WTC11 (cell line): ENCODE measurements at regions of chr2 and their contacts with region 1.

Region 1: DNA sequence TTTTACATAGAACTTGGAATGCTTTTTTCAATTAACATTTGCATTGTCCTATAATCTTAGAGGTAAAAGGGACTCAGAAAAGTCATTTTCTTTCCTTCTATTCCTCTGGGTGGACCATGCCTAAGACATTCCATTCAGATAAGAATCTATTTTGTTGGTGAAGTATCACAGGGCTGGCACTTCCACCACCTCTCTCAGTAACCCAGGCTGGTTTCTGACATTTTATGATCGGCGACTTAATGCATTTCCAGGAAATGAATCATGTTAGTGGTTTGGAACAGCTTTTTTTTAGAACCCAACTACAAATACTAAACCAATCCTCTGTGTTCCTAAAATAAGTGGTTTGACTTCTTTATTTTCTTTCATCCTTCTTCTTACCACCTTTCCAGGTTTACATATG is 27.0 kb downstream of the GAD1 start:
- DNase-seq: no peak
- ATAC-seq: no peak
- H3K4me3 Mint-ChIP-seq: no peak overlapping the region
- H3K27ac Mint-ChIP-seq: no peak overlapping the region
- H3K4me1 Mint-ChIP-seq: no peaks in the 10 kb centered on the region
- H3K27me3 Mint-ChIP-seq: no peaks in the 10 kb centered on the region
- CTCF ChIP-seq: no peak

Region 2: GRCh38 chr2:170822290-170823087 is 21.2 kb before region 1 on chr2:
- CTCF ChIA-PET with region 1: interaction called, 17 read pairs
- POLR2A ChIA-PET with region 1: no interaction called
- DNase-seq: peak; percentile 69
- ATAC-seq: peak; percentile 5
- H3K4me3 Mint-ChIP-seq: peak overlapping the region; percentile 84
- H3K27ac Mint-ChIP-seq: no peak overlapping the region
- H3K4me1 Mint-ChIP-seq: peaks cover 49% of the 10 kb centered on the region
- H3K27me3 Mint-ChIP-seq: peaks cover 98% of the 10 kb centered on the region
- CTCF ChIP-seq: peak; percentile 18; the same call in 1 of the 2 replicates

Region 3: DNA sequence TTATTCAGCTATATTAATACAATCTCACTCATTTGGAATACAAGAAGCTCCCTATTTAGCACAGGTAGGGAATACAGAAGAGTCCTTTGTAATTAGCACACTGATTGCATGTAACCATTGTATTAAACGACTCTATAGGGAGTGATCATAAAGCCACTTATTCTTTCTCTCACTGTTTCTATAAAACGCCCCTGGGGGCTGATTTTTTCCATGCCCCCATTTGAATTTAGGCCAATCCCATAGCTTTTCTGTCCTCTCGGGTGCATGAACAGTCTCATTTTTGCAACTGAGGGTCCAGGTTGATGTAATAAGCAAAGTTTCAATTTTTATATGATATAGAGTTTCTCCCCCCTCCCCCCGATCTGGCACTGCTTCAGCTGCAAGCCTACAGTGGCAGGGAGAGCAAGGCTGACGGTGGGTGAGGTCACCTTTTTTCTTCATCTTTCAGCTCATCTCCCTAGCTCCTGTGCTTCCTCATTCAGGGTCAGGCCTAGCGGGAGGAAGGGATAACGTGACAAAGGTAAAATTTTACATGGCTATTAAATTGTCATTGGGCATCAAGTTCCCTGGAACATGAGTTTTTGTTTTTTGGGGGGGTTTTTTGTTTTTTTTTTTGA is 18.7 kb after region 1 on chr2:
- CTCF ChIA-PET with region 1: interaction called, 11 read pairs
- POLR2A ChIA-PET with region 1: no interaction called
- DNase-seq: no peak
- ATAC-seq: no peak
- H3K4me3 Mint-ChIP-seq: no peak overlapping the region
- H3K27ac Mint-ChIP-seq: no peak overlapping the region
- H3K4me1 Mint-ChIP-seq: no peaks in the 10 kb centered on the region
- H3K27me3 Mint-ChIP-seq: peaks cover 4% of the 10 kb centered on the region; the same call in 1 of the 2 replicates
- CTCF ChIP-seq: no peak

Region 4: GRCh38 chr2:170878505-170878904 is 34.8 kb after region 1 on chr2:
- CTCF ChIA-PET with region 1: interaction called, 53 read pairs
- POLR2A ChIA-PET with region 1: interaction called, 7 read pairs
- DNase-seq: no peak
- ATAC-seq: no peak
- H3K4me3 Mint-ChIP-seq: no peak overlapping the region
- H3K27ac Mint-ChIP-seq: no peak overlapping the region
- H3K4me1 Mint-ChIP-seq: no peaks in the 10 kb centered on the region; the same call in 1 of the 2 replicates
- H3K27me3 Mint-ChIP-seq: peaks cover 2% of the 10 kb centered on the region; the same call in 1 of the 2 replicates
- CTCF ChIP-seq: no peak

Region 5: DNA sequence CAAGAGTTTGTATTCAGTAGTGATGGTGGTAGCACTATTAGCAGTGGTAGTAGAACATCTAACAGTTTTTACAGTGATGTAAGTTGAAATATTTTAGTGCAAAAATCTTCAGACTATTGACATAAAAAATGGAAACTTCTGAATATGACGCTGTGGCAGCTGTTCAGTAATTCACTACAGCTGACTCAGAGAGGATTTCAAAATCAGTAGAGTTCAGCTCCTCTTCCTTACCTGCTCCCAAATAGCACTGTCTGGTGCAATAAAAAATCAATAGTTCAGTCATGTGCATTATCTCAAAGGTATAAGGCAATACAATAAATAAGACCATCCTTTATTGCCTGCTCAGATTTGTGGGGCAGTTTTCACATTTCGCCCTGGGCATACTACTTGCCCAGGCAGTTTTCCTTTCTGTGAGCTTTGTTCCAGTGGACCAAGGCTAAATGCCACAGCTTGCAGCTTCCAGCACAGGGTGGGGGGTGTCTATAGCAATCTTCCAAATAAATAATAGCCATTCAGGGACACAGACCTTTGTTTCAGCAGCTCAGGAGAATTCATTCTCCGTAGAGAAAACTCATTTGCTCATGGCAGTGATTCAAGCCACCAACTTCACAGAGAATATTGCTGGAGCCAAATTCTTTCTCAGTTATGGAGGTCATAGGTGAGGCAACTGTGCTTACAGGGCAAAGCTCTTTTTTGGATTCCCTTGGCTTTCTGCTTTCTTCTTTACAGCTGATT is 51.5 kb after region 1 on chr2:
- CTCF ChIA-PET with region 1: interaction called, 11 read pairs
- POLR2A ChIA-PET with region 1: no interaction called
- DNase-seq: no peak
- ATAC-seq: no peak
- H3K4me3 Mint-ChIP-seq: no peak overlapping the region
- H3K27ac Mint-ChIP-seq: no peak overlapping the region
- H3K4me1 Mint-ChIP-seq: peaks cover 11% of the 10 kb centered on the region
- H3K27me3 Mint-ChIP-seq: no peaks in the 10 kb centered on the region
- CTCF ChIP-seq: no peak